ENCODE measurements at regions of chr3 and their contacts with region 1.

Region 1: DNA sequence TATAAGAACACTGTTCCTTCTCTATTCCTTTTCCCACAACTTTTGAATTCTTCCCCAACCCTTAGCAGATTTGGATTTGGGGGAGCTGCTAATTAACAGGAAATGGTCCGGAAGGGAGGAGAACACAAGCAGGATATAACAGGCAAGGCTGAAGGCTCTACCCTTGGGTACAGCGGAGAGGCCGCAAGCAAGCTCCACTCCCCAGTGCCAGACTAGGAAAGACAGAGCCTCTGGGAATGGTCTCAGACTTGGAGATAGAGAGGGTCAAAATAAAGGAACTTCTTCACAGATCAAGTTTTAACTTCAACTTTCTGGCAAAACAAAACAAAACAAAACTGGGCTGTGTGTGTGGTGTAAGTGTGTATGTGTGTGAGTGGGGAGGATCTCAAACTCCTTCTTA is 160.9 kb downstream of the TP63 start:
- DNase-seq: peak; percentile 74
- H3K4me3 ChIP-seq: peak overlapping the region; percentile 70 to 97 (median 92)
- H3K27ac ChIP-seq: peak overlapping the region; percentile 97
- H3K4me1 ChIP-seq: peaks cover 34% of the 10 kb centered on the region
- H3K27me3 ChIP-seq: no peaks in the 10 kb centered on the region
- CTCF ChIP-seq: no peak

Region 2: GRCh38 chr3:189512039-189512438 is 280.1 kb before region 1 on chr3:
- CTCF ChIA-PET with region 1: no interaction called
- dilution Hi-C with region 1: no loop called
- in situ Hi-C with region 1: no loop called
- intact Hi-C with region 1: loop called (anchors 2 kb)
- DNase-seq: no peak
- H3K4me3 ChIP-seq: no peak overlapping the region
- H3K27ac ChIP-seq: peak overlapping the region; percentile 96
- H3K4me1 ChIP-seq: peaks cover 24% of the 10 kb centered on the region
- H3K27me3 ChIP-seq: no peaks in the 10 kb centered on the region
- CTCF ChIP-seq: no peak

Region 3: DNA sequence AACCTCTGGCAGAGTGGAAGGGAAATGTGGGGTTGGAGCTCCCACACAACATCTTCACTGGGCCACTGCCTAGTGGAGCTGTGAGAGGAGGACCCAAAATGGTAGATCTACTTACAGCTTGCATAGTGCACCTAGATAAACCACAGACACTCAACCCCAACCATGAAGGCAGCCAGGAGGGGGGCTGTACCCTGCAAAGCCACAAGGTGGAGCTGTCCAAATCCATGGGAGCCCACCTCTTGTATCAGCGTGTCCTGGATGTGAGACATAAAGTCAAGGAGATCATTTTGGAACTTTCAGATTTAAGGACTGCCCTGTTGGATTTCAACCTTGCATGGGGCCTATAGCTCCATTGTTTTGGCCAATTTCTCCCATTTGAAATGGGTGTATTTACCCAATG is 140.1 kb before region 1 on chr3:
- CTCF ChIA-PET with region 1: no interaction called
- dilution Hi-C with region 1: no loop called
- in situ Hi-C with region 1: no loop called
- intact Hi-C with region 1: loop called (anchors 1 kb)
- DNase-seq: peak; percentile 23
- H3K4me3 ChIP-seq: no peak overlapping the region
- H3K27ac ChIP-seq: no peak overlapping the region
- H3K4me1 ChIP-seq: no peaks in the 10 kb centered on the region
- H3K27me3 ChIP-seq: no peaks in the 10 kb centered on the region
- CTCF ChIP-seq: no peak